ENCODE measurements at regions of chr17 and their contacts with region 1.

Region 1: DNA sequence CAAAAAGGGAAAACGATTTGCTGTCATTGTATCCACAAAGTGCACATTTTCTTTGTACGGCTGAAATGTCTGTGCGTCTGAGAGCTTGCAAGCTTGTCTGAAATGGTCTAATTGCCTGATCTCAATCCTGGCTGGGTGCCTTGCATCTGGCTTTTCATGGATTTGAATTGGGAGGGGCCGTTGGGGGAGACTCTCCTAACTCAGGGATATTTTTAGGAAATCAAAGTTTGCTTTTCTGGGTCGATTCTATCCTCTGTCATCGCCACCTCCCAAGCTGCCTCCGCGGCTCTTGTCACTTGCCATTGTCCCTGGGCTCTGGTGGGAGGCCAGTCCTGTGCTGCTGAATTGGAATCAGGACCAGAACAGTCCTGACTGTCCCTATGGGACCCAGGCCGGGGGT is 33.3 kb upstream of the MGAT5B start:
- DNase-seq: no peak
- ATAC-seq: no peak
- H3K4me3 ChIP-seq: no peak overlapping the region
- H3K27ac ChIP-seq: no peak overlapping the region
- H3K4me1 ChIP-seq: peaks cover 0 to 7% (median under 1%) of the 10 kb centered on the region in 12 donors
- H3K27me3 ChIP-seq: peaks cover 0 to 23% (median 2%) of the 10 kb centered on the region in 9 donors
- CTCF ChIP-seq: no peak
- POLR2A ChIP-seq: no peak

Region 2: GRCh38 chr17:76753061-76753961 is 81.6 kb before region 1 on chr17:
- intact Hi-C with region 1: loop called in 1 of 10 experiments (anchors 10 kb)
- DNase-seq: no peak
- ATAC-seq: peak in 1 of 4 donors; percentile 20
- H3K4me3 ChIP-seq: peak overlapping the region in 1 of 12 donors; percentile 29
- H3K27ac ChIP-seq: peak overlapping the region in 1 of 12 donors; percentile 54
- H3K4me1 ChIP-seq: peaks cover 0 to 23% (median 3%) of the 10 kb centered on the region in 12 donors
- H3K27me3 ChIP-seq: no peaks in the 10 kb centered on the region
- CTCF ChIP-seq: no peak
- POLR2A ChIP-seq: no peak

Measured in heart left ventricle (tissue), 16 donors.